ENCODE measurements at regions of chr9 and their contacts with region 1.

Region 1: DNA sequence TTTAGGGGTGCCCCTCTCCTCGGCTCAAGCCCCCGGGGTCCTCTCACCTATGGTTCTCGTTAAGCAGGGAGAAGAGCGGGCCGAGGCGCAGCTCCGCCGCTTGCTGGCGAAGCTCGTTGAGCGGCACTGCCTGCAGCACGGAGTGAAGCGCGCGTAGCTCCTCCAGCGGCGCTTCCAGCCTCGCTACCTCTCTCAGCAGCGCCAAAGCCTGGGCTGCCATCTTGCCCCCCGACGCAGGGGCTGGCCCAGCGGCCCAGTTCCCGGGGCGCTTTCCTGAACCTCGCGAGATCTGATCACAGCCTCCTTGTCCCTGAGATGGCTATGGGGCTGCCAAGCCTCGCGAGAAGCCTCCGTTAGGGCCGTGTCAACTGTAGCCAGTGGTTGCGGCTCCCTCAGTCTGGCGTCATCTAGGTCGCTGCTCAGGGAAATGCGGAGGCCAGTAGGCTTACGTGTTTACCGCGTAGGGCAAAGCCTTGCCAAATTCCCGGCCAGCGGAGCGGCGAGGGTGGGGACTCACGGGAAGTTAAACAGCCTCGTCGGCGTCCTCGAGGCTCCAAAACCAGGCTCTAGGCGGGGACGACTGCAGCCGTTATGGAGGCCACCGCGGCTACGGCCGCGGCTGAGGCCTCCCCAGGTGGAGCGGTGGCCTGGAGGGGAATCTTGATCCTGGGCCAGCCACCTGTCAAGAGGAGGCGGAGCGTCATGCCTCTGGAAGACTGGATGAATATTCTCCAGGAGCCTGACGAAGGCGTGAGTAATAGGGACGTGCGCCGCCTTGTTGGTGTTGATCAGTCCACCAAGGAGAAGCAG is at the start of gene PSMD5:
- DNase-seq: peak; percentile 98
- H3K4me3 Mint-ChIP-seq: peak within 1 kb of the TSS; percentile 98
- H3K27ac Mint-ChIP-seq: peak within 1 kb of the TSS; percentile 96
- H3K4me1 Mint-ChIP-seq: peaks cover 73% of the 10 kb centered on the region
- H3K27me3 Mint-ChIP-seq: no peaks in the 10 kb centered on the region
- total RNA-seq, gene PSMD5: 57.7 and 59.2 TPM in 2 replicates

Region 2: GRCh38 chr9:120714088-120714845 is 128.6 kb before region 1 on chr9 and contains the start of gene MEGF9:
- intact Hi-C with region 1: loop called (anchors 1 kb)
- DNase-seq: peak; percentile 96
- H3K4me3 Mint-ChIP-seq: peak within 1 kb of the TSS; percentile 92
- H3K27ac Mint-ChIP-seq: peak within 1 kb of the TSS; percentile 82
- H3K4me1 Mint-ChIP-seq: peaks cover 41% of the 10 kb centered on the region
- H3K27me3 Mint-ChIP-seq: no peaks in the 10 kb centered on the region
- total RNA-seq, gene MEGF9: 5.4 and 5.9 TPM in 2 replicates

Region 3: DNA sequence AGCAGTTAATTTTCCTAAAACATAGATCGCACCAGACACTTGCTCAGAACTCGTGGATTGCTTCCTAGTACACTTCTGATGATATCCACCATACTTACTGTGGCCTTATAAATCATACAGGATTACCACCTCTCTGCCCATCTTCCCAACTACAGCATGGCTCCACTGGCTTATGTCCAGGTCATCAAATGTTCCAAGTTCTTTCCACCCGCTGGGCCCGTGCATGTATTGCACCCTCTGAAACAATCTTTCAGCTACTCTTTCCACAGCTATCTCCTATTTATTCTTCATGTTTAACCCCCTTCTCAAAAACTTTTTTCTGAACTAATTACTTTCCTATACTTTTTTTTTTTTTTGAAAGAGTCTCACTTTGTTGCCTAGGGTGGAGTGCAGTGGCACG is 68.2 kb before region 1 on chr9:
- intact Hi-C with region 1: loop called (anchors 5 kb)
- DNase-seq: no peak
- H3K4me3 Mint-ChIP-seq: no peak overlapping the region
- H3K27ac Mint-ChIP-seq: no peak overlapping the region
- H3K4me1 Mint-ChIP-seq: peaks cover 26% of the 10 kb centered on the region
- H3K27me3 Mint-ChIP-seq: no peaks in the 10 kb centered on the region

Region 4: GRCh38 chr9:120854596-120855327 is 11.9 kb after region 1 on chr9:
- intact Hi-C with region 1: loop called (anchors 1 kb)
- DNase-seq: no peak
- H3K4me3 Mint-ChIP-seq: no peak overlapping the region
- H3K27ac Mint-ChIP-seq: peak overlapping the region; percentile 42
- H3K4me1 Mint-ChIP-seq: peaks cover 8% of the 10 kb centered on the region
- H3K27me3 Mint-ChIP-seq: no peaks in the 10 kb centered on the region

Region 5: DNA sequence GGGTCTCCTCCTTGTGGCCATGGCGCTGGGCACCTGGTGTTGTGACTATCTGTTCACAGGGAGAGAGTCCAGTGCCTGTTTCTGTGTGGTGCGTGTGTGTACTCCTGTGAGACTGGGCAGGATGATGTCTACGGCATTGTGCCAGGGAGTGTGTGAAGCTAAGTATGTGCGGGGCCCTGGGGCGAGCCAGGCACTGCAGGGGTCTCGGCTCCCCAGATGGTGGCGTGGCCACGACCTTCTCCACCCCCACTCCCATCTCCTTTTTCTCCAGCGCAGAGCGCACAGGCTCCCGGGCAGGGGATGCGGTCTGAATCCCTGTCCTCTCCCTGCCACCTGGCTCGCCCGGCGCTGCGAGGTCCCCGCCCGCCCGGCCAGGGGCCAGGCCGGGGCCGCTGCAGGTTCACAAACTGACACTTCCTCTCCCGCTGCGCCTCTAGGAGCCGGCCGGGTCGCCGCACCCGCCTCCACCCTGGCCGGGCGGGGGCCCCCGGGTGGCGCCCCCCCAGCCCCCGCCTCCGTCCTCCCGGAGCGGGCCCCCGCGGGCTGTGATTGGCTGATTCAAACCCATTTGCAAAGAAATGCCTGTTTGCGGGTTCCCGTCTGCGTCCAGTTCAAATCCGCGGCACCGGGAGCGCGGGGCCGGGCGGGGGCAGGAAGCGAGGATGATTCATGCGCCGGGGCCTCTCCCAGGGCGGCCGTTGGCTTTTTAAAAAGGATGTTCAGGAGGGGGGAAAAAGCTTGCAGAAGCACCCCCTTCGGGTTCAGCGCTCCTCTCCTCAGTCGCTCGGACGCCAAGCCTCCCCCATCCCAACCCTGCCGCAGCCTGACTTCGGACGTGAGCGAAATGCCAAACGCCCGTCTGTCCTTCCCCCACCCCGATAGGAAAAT is 33.3 kb after region 1 on chr9:
- intact Hi-C with region 1: loop called (anchors 1 kb)
- DNase-seq: peak; percentile 86
- H3K4me3 Mint-ChIP-seq: peak overlapping the region; percentile 89
- H3K27ac Mint-ChIP-seq: peak overlapping the region; percentile 97
- H3K4me1 Mint-ChIP-seq: peaks cover 75% of the 10 kb centered on the region
- H3K27me3 Mint-ChIP-seq: no peaks in the 10 kb centered on the region

Region 6: GRCh38 chr9:120928483-120929228 is 85.8 kb after region 1 on chr9:
- intact Hi-C with region 1: loop called (anchors 1 kb)
- DNase-seq: peak; percentile 82
- H3K4me3 Mint-ChIP-seq: peak overlapping the region; percentile 89
- H3K27ac Mint-ChIP-seq: peak overlapping the region; percentile 96
- H3K4me1 Mint-ChIP-seq: peaks cover 87% of the 10 kb centered on the region
- H3K27me3 Mint-ChIP-seq: no peaks in the 10 kb centered on the region

Region 7: GRCh38 chr9:121121582-121122087 is 278.7 kb after region 1 on chr9:
- intact Hi-C with region 1: loop called (anchors 1 kb)
- DNase-seq: peak; percentile 96
- H3K4me3 Mint-ChIP-seq: peak overlapping the region; percentile 75
- H3K27ac Mint-ChIP-seq: peak overlapping the region; percentile 78
- H3K4me1 Mint-ChIP-seq: peaks cover 50% of the 10 kb centered on the region
- H3K27me3 Mint-ChIP-seq: no peaks in the 10 kb centered on the region